ENCODE measurements at regions of chr5 and their contacts with region 1.

Region 1: DNA sequence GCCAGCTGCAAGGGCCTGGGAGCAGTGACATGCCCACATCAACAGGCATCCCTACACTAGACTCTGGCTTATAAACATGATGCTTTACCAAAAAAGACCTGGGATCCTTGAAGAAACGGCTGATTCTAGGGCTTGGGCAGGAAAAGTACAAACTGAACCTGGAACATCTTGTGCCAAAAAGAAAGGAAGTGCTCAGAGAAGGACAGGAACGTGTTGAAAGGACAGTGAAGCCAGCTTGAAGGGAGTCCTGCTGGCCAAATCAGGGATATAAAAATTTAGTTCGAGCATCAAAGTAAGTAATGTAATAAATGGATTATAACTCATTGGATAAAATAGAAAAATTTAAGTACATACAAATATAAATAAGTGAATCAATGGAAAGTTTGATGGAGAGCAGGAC is 58.1 kb downstream of the ALDH7A1 start:
- DNase-seq: no peak
- H3K4me3 ChIP-seq: no peak overlapping the region
- H3K27ac ChIP-seq: no peak overlapping the region
- H3K4me1 ChIP-seq: peaks cover 14% of the 10 kb centered on the region
- H3K27me3 ChIP-seq: no peaks in the 10 kb centered on the region
- CTCF ChIP-seq: peak; percentile 11 to 18

Region 2: DNA sequence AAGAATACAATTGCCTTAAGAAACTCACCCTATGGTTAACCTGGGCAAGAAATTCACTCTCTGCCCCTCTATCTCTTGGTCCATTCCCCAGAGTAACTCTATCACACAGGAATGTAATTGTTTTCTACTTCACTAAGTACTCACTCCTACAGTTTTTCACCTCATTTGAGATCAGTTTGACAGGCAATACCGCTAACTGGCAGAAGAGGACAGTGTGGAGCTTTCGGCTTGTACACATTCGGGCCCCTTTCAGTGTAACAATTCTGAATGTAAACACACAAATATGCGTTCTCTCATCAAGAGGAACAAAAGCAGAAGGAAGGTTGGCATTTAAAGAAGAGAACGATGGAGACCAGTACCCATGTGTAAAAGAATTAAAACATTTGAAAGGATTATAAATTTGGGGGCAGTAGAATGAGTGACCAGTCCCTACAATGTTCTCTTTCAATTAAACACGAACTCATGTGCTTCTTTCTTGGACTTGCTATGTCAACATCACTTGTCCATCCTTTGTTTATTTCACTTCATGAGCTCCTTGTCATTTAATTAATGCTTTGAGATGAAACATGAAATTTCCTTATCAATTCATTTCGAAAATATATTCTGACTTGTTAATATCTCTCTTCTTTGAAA is 302.2 kb before region 1 on chr5:
- CTCF ChIA-PET with region 1: no interaction called
- dilution Hi-C with region 1: no loop called
- in situ Hi-C with region 1: no loop called
- intact Hi-C with region 1: loop called (anchors 5 kb)
- DNase-seq: peak; percentile 13
- H3K4me3 ChIP-seq: no peak overlapping the region
- H3K27ac ChIP-seq: no peak overlapping the region
- H3K4me1 ChIP-seq: peaks cover 12% of the 10 kb centered on the region
- H3K27me3 ChIP-seq: no peaks in the 10 kb centered on the region
- CTCF ChIP-seq: peak; percentile 92 to 93

Region 3: GRCh38 chr5:126471875-126472537 is 64.9 kb before region 1 on chr5:
- CTCF ChIA-PET with region 1: no interaction called
- dilution Hi-C with region 1: loop called (anchors 5 kb)
- in situ Hi-C with region 1: no loop called
- intact Hi-C with region 1: loop called (anchors 5 kb)
- DNase-seq: peak; percentile 86
- H3K4me3 ChIP-seq: no peak overlapping the region
- H3K27ac ChIP-seq: peak overlapping the region; percentile 80
- H3K4me1 ChIP-seq: peaks cover 32% of the 10 kb centered on the region
- H3K27me3 ChIP-seq: no peaks in the 10 kb centered on the region
- CTCF ChIP-seq: no peak

Region 4: GRCh38 chr5:126490167-126490940 is 46.5 kb before region 1 on chr5:
- CTCF ChIA-PET with region 1: interaction called, 12 read pairs
- dilution Hi-C with region 1: no loop called
- in situ Hi-C with region 1: no loop called
- intact Hi-C with region 1: loop called (anchors 2 kb)
- DNase-seq: no peak
- H3K4me3 ChIP-seq: no peak overlapping the region
- H3K27ac ChIP-seq: peak overlapping the region; percentile 15
- H3K4me1 ChIP-seq: peaks cover 2% of the 10 kb centered on the region
- H3K27me3 ChIP-seq: no peaks in the 10 kb centered on the region
- CTCF ChIP-seq: peak; percentile 33 to 49

Region 5: DNA sequence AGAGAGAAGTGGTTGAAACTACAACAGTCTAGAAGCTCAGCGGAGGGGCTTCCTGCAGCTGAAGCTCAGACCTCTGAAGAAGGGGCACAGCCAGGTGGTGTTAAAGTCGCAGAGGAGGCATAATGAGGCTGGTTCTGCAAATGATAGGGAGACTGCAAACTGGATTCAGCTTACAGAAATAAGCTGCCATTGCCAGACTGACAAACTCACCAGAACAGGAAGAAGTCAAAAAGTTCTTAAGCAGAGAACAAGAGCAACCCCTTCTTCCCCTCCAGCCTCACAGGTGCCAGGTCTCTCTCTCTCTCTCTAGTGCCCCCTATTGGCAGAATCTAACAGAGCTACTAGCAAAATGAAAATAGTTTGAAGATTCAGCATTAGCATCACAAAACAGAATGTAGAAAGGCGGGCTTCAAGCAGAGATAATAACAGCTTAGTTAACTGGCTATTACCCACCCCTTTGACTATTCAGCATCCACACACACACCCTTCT is 37.0 kb before region 1 on chr5:
- CTCF ChIA-PET with region 1: interaction called, 14 read pairs
- dilution Hi-C with region 1: no loop called
- in situ Hi-C with region 1: no loop called
- intact Hi-C with region 1: loop called (anchors 2 kb)
- DNase-seq: no peak
- H3K4me3 ChIP-seq: no peak overlapping the region
- H3K27ac ChIP-seq: no peak overlapping the region
- H3K4me1 ChIP-seq: peaks cover 8% of the 10 kb centered on the region
- H3K27me3 ChIP-seq: no peaks in the 10 kb centered on the region
- CTCF ChIP-seq: peak; percentile 46 to 66

Region 6: GRCh38 chr5:126801992-126802294 is 265.1 kb after region 1 on chr5:
- CTCF ChIA-PET with region 1: no interaction called
- dilution Hi-C with region 1: no loop called
- in situ Hi-C with region 1: no loop called
- intact Hi-C with region 1: loop called (anchors 5 kb)
- DNase-seq: peak; percentile 22
- H3K4me3 ChIP-seq: no peak overlapping the region
- H3K27ac ChIP-seq: no peak overlapping the region
- H3K4me1 ChIP-seq: peaks cover 5% of the 10 kb centered on the region
- H3K27me3 ChIP-seq: no peaks in the 10 kb centered on the region
- CTCF ChIP-seq: peak; percentile 20 to 47

Region 7: GRCh38 chr5:126869005-126869451 is 332.2 kb after region 1 on chr5:
- CTCF ChIA-PET with region 1: no interaction called
- dilution Hi-C with region 1: no loop called
- in situ Hi-C with region 1: no loop called
- intact Hi-C with region 1: no loop called
- DNase-seq: peak; percentile 3
- H3K4me3 ChIP-seq: peak overlapping the region in 2 of 3 experiments; percentile 11 to 26
- H3K27ac ChIP-seq: no peak overlapping the region
- H3K4me1 ChIP-seq: peaks cover 4% of the 10 kb centered on the region
- H3K27me3 ChIP-seq: no peaks in the 10 kb centered on the region
- CTCF ChIP-seq: no peak